CD8-positive, alpha-beta T cell (primary cell): ENCODE measurements at regions of chr1 and their contacts with region 1.

Region 1: GRCh38 chr1:85585799-85586198 is 5.2 kb downstream of the CCN1 start:
- DNase-seq: no peak
- ATAC-seq: no peak
- H3K4me3 ChIP-seq: no peak overlapping the region
- H3K4me3 Mint-ChIP-seq: no peak overlapping the region
- H3K27ac ChIP-seq: no peak overlapping the region
- H3K27ac Mint-ChIP-seq: no peak overlapping the region
- H3K4me1 ChIP-seq: peaks cover 3% of the 10 kb centered on the region
- H3K4me1 Mint-ChIP-seq: peaks cover 9% of the 10 kb centered on the region
- H3K27me3 ChIP-seq: peaks cover 7% of the 10 kb centered on the region in 2 experiments
- H3K27me3 Mint-ChIP-seq: peaks cover 22% of the 10 kb centered on the region
- CTCF ChIP-seq: no peak

Region 2: GRCh38 chr1:85240174-85240601 is 345.6 kb before region 1 on chr1:
- CTCF ChIA-PET with region 1: no interaction called
- POLR2A ChIA-PET with region 1: no interaction called
- intact Hi-C with region 1: loop called in 1 of 2 experiments (anchors 5 kb)
- DNase-seq: peak in 2 of 9 experiments; percentile 35 to 47
- ATAC-seq: peak; percentile 61
- H3K4me3 ChIP-seq: no peak overlapping the region
- H3K4me3 Mint-ChIP-seq: no peak overlapping the region
- H3K27ac ChIP-seq: no peak overlapping the region
- H3K27ac Mint-ChIP-seq: no peak overlapping the region
- H3K4me1 ChIP-seq: no peaks in the 10 kb centered on the region
- H3K4me1 Mint-ChIP-seq: peaks cover 13% of the 10 kb centered on the region
- H3K27me3 ChIP-seq: peaks cover 0 to 3% of the 10 kb centered on the region in 2 experiments
- H3K27me3 Mint-ChIP-seq: peaks cover 14% of the 10 kb centered on the region
- CTCF ChIP-seq: no peak